ENCODE measurements at regions of chr17 and their contacts with region 1.

Region 1: GRCh38 chr17:9115446-9116191 is 94.3 kb downstream of the NTN1 start:
- DNase-seq: peak; percentile 82
- ATAC-seq: peak; percentile 95
- H3K4me3 Mint-ChIP-seq: peak overlapping the region; percentile 59
- H3K27ac Mint-ChIP-seq: peak overlapping the region; percentile 80
- H3K4me1 Mint-ChIP-seq: peaks cover 16% of the 10 kb centered on the region
- H3K27me3 Mint-ChIP-seq: no peaks in the 10 kb centered on the region

Region 2: DNA sequence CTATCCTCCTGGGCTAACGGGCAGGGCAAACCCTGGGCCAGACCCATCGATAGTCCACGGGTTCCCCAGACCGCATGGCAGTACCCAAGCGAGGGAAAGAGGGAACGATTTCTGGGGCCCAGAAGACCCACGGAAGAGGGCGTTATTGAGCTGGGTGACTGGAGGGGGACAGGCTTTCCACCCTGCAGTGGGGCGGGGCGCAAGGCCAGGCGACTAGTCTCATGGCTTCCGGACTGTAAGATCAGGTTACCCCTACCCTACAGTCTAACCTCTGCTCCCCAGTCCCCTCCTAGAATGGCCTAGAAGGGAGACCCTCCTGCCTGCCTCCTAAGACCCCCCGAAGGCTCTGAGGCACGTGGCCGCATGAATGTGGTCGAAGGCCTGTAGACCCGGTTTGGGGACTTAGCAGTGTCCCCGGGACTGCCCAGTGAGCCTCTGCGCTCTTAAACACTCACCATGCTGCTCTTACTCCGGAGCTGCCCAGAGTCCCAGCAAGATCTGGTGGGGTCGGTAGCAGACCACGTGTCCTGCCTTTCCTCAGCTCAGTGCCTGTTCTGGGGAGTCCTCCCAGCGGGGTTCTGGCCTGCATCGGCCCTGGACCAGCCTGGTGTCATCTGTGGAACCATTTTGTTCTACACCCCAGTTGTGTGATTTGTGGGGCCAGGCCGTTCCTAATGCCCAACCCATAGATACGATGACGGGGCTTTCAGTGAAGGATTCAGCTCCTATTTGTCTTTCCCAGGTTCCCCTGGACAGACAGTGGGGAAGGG is 892.1 kb before region 1 on chr17:
- CTCF ChIA-PET with region 1: no interaction called
- POLR2A ChIA-PET with region 1: no interaction called
- intact Hi-C with region 1: no loop called
- DNase-seq: peak; percentile 76
- ATAC-seq: peak; percentile 6
- H3K4me3 Mint-ChIP-seq: peak overlapping the region; percentile 98
- H3K27ac Mint-ChIP-seq: peak overlapping the region; percentile 98
- H3K4me1 Mint-ChIP-seq: peaks cover 53% of the 10 kb centered on the region
- H3K27me3 Mint-ChIP-seq: no peaks in the 10 kb centered on the region

Region 3: GRCh38 chr17:8924595-8924994 is 191.0 kb before region 1 on chr17:
- CTCF ChIA-PET with region 1: no interaction called
- POLR2A ChIA-PET with region 1: no interaction called
- intact Hi-C with region 1: no loop called
- DNase-seq: no peak
- ATAC-seq: peak; percentile 58
- H3K4me3 Mint-ChIP-seq: no peak overlapping the region
- H3K27ac Mint-ChIP-seq: no peak overlapping the region
- H3K4me1 Mint-ChIP-seq: peaks cover 29% of the 10 kb centered on the region
- H3K27me3 Mint-ChIP-seq: no peaks in the 10 kb centered on the region

Region 4: GRCh38 chr17:9098257-9098825 is 17.3 kb before region 1 on chr17:
- CTCF ChIA-PET with region 1: no interaction called
- POLR2A ChIA-PET with region 1: no interaction called
- intact Hi-C with region 1: no loop called
- DNase-seq: no peak
- ATAC-seq: no peak
- H3K4me3 Mint-ChIP-seq: no peak overlapping the region
- H3K27ac Mint-ChIP-seq: no peak overlapping the region
- H3K4me1 Mint-ChIP-seq: no peaks in the 10 kb centered on the region
- H3K27me3 Mint-ChIP-seq: peaks cover 20% of the 10 kb centered on the region

Region 5: GRCh38 chr17:9522074-9522473 is 406.5 kb after region 1 on chr17:
- CTCF ChIA-PET with region 1: interaction called, 6 read pairs
- POLR2A ChIA-PET with region 1: no interaction called
- intact Hi-C with region 1: loop called in 1 of 2 experiments (anchors 10 kb)
- DNase-seq: peak; percentile 14
- ATAC-seq: no peak
- H3K4me3 Mint-ChIP-seq: no peak overlapping the region
- H3K27ac Mint-ChIP-seq: no peak overlapping the region
- H3K4me1 Mint-ChIP-seq: peaks cover 13% of the 10 kb centered on the region
- H3K27me3 Mint-ChIP-seq: no peaks in the 10 kb centered on the region

Region 6: GRCh38 chr17:9529033-9529700 is 413.5 kb after region 1 on chr17:
- CTCF ChIA-PET with region 1: no interaction called
- POLR2A ChIA-PET with region 1: no interaction called
- intact Hi-C with region 1: loop called (anchors 2 to 10 kb)
- DNase-seq: peak; percentile 19
- ATAC-seq: peak; percentile 97
- H3K4me3 Mint-ChIP-seq: no peak overlapping the region
- H3K27ac Mint-ChIP-seq: no peak overlapping the region
- H3K4me1 Mint-ChIP-seq: peaks cover 12% of the 10 kb centered on the region
- H3K27me3 Mint-ChIP-seq: no peaks in the 10 kb centered on the region

Measured in activated CD4-positive, alpha-beta T cell treated with anti-CD3 and anti-CD28 coated beads for 36 hours (primary cell).